Activated T-helper 1 cell treated with anti-CD3 and anti-CD28 coated beads, Interleukin-12 subunit alpha, Interleukin-12 subunit beta, Interleukin-2, Interleukin-4 antibody, amounts not matched to agents 30 ng/mL and 10 ng/mL and 1 ng/mL, durations not matched to agents 14 hours and 24 hours and 36 hours (primary cell): ENCODE measurements at regions of chr12 and their contacts with region 1.

Region 1: DNA sequence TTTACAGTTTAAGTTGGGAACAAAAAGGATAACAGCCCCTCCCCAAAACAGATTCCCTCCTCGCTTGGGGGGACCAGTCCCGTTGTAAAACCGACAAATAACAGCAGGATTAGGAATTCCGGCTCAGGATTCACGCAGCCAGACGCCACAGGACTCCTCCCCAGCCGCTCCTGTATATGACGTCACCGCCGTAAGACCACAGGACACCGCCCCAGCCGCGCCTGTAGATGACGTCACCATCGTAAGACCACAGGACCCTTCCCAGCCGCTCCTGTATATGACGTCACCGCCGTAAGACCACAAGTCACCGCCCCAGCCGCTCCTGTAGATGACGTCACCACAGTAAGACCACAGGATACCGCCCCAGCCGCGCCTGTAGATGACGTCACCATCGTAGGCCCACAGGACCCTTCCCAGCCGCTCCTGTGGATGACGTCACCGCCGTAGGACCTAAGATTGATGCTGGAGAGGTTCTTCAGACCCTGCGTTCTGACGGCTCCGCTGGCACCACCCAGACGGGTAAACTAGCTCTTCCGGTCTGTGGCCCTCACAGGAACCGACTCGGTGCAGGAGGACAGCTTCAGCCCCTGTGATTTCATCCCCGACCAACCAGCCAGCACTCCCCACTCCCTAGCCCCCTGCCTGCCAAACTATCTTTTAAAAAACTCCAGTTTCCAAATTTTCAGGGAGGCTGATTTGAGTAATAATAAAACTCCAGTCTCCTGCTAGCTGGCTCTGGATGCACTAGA is 43.9 kb upstream of the FBRSL1 start:
- DNase-seq: peak; percentile 62
- H3K4me3 Mint-ChIP-seq: peak overlapping the region; percentile 93
- H3K27ac Mint-ChIP-seq: peak overlapping the region; percentile 97
- H3K4me1 Mint-ChIP-seq: peaks cover 37% of the 10 kb centered on the region
- H3K27me3 Mint-ChIP-seq: peaks cover 3% of the 10 kb centered on the region

Region 2: GRCh38 chr12:132429946-132430643 is 16.0 kb before region 1 on chr12:
- intact Hi-C with region 1: loop called (anchors 2 kb)
- DNase-seq: peak; percentile 66
- H3K4me3 Mint-ChIP-seq: peak overlapping the region; percentile 62
- H3K27ac Mint-ChIP-seq: peak overlapping the region; percentile 40
- H3K4me1 Mint-ChIP-seq: peaks cover 25% of the 10 kb centered on the region
- H3K27me3 Mint-ChIP-seq: no peaks in the 10 kb centered on the region

Region 3: DNA sequence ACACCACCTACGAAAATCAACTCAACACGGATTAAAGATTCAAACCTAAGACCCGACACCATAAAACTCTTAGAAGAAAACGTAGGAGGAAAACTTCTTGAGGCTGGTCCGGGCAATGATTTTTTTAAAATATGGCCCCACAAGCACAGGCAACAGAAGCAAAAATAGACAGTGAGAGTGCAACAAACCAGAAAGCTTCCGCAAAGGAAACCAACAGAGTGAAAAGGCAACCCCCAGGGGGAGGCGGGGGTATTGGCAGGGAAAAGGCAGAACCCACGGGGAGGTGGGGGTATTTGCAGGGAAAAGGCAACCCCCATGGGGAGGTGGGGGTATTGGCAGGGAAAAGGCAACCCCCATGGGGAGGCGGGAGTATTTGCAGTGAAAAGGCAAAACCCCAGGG is 23.4 kb after region 1 on chr12:
- intact Hi-C with region 1: loop called (anchors 2 kb)
- DNase-seq: no peak
- H3K4me3 Mint-ChIP-seq: no peak overlapping the region
- H3K27ac Mint-ChIP-seq: no peak overlapping the region
- H3K4me1 Mint-ChIP-seq: peaks cover 17% of the 10 kb centered on the region
- H3K27me3 Mint-ChIP-seq: peaks cover 6% of the 10 kb centered on the region